HCT116 (cell line): ENCODE measurements at regions of chr20 and their contacts with region 1.

Region 1: DNA sequence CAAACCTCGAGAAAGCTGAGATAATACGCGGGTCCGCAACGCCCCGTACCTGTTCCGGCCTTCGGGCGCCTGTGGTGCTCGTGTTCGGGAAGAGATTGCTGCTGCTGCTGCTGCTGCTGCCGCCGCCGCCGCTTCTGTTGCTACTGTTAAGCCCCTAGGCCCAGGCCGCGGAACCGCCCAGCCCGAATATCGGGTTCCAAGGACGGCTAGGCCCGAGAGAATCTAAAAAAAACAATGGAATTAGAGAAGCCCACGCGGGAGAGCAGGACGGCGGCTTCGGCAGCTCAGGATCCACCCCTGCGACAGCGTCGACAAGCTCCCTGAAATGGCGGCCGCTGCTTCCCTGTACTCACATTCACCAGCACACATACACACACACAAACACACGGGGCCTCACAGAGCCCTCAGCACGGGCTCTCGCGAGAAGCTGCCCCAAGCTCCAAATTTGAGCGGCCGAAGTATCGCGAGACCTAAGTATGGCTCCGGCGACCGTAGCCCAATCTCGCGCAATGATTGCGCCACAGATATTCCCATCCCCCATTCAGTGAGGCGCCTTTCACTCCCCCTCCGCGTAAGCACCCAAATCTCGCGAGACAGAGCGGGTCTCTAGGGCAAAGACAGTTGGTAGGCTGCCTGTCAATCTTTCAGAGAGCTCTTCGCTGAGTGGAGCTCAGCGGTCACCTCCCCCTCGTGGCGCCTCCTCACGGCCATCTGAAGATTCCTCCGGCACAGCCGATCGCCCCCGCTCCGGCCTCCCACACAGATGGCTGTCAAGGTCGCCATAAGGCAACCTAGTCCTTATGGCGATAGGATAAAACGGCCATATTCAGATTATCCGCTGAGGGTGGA is at the start of gene RBM39:
- DNase-seq: peak; percentile 100
- ATAC-seq: peak; percentile 94
- H3K4me3 ChIP-seq: peak within 1 kb of the TSS; percentile 77 to 97
- H3K27ac ChIP-seq: peak within 1 kb of the TSS; percentile 91
- H3K4me1 ChIP-seq: peaks cover 10 to 28% of the 10 kb centered on the region in 2 experiments
- H3K27me3 ChIP-seq: no peaks in the 10 kb centered on the region
- CTCF ChIP-seq: peak in 1 of 3 experiments; percentile 38; a peak in 1 of 6 replicates
- POLR2A ChIP-seq: peak; percentile 70
- RAD21 ChIP-seq: no peak
- total RNA-seq, gene RBM39: 234 TPM

Region 2: GRCh38 chr20:35652641-35653429 is 89.3 kb before region 1 on chr20:
- CTCF ChIA-PET with region 1: no interaction called
- POLR2A ChIA-PET with region 1: no interaction called
- RAD21 ChIA-PET with region 1: no interaction called
- intact Hi-C with region 1: no loop called
- DNase-seq: no peak
- ATAC-seq: no peak
- H3K4me3 ChIP-seq: no peak overlapping the region
- H3K27ac ChIP-seq: no peak overlapping the region
- H3K4me1 ChIP-seq: no peaks in the 10 kb centered on the region
- H3K27me3 ChIP-seq: no peaks in the 10 kb centered on the region
- CTCF ChIP-seq: no peak
- POLR2A ChIP-seq: no peak
- RAD21 ChIP-seq: no peak

Region 3: DNA sequence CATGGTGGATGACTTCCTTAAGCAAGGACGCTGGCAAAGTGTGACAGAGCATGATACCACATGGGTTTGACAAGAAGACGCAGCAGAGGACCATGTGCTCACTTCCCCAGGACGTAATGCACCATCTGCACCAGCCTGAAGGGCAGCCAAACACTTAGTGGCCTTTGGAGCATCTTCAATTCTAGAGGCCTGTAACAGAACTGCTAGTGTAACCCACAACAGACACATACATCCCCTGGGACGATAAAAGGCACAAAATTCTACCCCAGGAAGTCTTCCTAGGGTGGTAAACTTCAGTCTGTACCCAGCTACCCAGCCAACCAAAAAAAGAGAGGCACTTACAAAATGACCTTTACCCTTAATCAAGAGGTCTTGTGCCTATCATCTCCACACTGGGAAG is 68.2 kb before region 1 on chr20:
- CTCF ChIA-PET with region 1: no interaction called
- POLR2A ChIA-PET with region 1: no interaction called
- RAD21 ChIA-PET with region 1: no interaction called
- intact Hi-C with region 1: no loop called
- DNase-seq: no peak
- ATAC-seq: no peak
- H3K4me3 ChIP-seq: no peak overlapping the region
- H3K27ac ChIP-seq: no peak overlapping the region
- H3K4me1 ChIP-seq: no peaks in the 10 kb centered on the region
- H3K27me3 ChIP-seq: no peaks in the 10 kb centered on the region
- CTCF ChIP-seq: no peak
- POLR2A ChIP-seq: no peak
- RAD21 ChIP-seq: no peak

Region 4: DNA sequence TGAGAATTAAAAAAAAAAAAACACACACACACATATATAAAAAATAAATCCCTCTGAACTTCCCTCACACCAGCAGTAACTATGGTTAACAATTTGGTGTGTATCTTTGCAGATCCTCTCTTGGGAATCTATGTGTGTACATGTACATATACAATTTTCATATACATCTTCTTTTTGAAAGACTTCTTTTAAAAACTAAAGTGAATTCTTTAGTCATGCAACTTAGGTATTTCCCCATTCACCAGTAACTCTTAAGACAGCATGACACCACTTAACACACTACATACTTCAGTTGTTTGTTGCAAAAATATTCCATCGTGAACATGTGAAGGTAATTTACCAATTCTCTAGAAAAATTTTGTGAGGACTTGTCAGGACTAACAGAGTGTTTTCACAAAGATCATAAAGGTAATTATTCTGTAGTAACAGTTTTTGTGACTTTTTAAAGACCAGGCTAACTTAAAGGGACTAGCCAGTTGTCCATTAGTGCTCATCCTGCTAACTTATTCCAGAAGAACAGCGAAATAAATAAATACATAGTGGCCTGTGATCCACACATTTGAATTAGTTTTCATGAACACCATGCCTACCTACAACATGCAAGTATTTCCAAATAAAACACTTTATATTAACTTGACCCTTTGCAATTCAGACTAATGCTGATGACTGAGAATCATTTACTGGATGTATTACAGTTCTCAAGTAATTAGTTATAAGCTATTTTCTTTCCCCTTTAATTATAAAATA is 12.1 kb before region 1 on chr20:
- CTCF ChIA-PET with region 1: no interaction called
- POLR2A ChIA-PET with region 1: interaction called, 13 read pairs
- RAD21 ChIA-PET with region 1: no interaction called
- intact Hi-C with region 1: no loop called
- DNase-seq: no peak
- ATAC-seq: no peak
- H3K4me3 ChIP-seq: no peak overlapping the region
- H3K27ac ChIP-seq: no peak overlapping the region
- H3K4me1 ChIP-seq: no peaks in the 10 kb centered on the region
- H3K27me3 ChIP-seq: no peaks in the 10 kb centered on the region
- CTCF ChIP-seq: no peak
- POLR2A ChIP-seq: no peak
- RAD21 ChIP-seq: no peak

Region 5: GRCh38 chr20:35771689-35772562 is 29.8 kb after region 1 on chr20 and contains the start of gene PHF20:
- CTCF ChIA-PET with region 1: interaction called, 4 read pairs
- POLR2A ChIA-PET with region 1: interaction called, 58 read pairs
- RAD21 ChIA-PET with region 1: interaction called in 1 of 2 experiments, 3 read pairs
- intact Hi-C with region 1: no loop called
- DNase-seq: peak; percentile 92
- ATAC-seq: peak; percentile 95
- H3K4me3 ChIP-seq: peak within 1 kb of the TSS; percentile 83 to 91
- H3K27ac ChIP-seq: peak within 1 kb of the TSS; percentile 69
- H3K4me1 ChIP-seq: peaks cover 24 to 44% of the 10 kb centered on the region in 2 experiments
- H3K27me3 ChIP-seq: no peaks in the 10 kb centered on the region
- CTCF ChIP-seq: no peak
- POLR2A ChIP-seq: peak; percentile 81
- RAD21 ChIP-seq: no peak
- total RNA-seq, gene PHF20: 40.8 TPM

Region 6: DNA sequence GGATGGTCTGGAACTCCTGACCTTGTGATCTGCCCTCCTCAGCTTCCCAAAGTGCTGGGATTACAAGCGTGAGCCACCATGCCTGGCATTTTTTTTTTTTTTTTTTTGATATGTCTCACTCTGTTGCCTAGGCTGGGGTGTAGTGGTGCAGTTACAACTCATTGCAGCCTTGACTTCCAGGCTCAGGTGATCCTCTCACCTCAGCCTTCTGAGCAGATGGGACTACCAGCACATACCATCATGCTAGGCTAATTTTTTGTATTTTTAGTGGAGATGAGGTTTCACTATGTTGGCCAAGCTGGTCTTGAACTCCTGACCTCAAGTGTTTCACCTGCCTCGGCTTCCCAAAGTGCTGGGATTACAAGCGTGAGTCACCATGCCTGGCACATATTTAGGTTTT is 64.0 kb after region 1 on chr20:
- CTCF ChIA-PET with region 1: no interaction called
- POLR2A ChIA-PET with region 1: no interaction called
- RAD21 ChIA-PET with region 1: no interaction called
- intact Hi-C with region 1: no loop called
- DNase-seq: no peak
- ATAC-seq: no peak
- H3K4me3 ChIP-seq: no peak overlapping the region
- H3K27ac ChIP-seq: no peak overlapping the region
- H3K4me1 ChIP-seq: peaks cover 6 to 9% of the 10 kb centered on the region in 2 experiments
- H3K27me3 ChIP-seq: no peaks in the 10 kb centered on the region
- CTCF ChIP-seq: no peak
- POLR2A ChIP-seq: no peak
- RAD21 ChIP-seq: no peak

Region 7: DNA sequence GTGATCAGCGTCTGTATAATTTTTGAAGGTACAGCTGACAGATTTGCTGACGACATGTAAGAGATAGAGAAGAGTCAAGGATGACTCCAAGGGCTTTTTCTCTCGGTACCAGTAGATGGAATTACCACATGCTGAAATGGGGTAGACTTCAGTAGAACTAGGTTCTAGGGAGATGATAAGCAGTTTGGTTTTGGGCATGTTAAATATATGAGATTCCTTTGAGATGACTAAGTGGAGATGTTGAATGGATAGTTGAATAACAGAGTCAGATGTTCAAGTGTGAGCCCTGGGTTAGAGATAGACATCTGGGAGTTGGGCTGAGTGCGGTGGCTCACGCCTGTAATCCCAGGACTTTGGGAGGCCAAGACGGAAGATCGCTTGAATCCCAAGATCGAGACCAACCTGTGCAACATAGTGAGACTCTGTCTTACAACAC is 79.7 kb after region 1 on chr20:
- CTCF ChIA-PET with region 1: no interaction called
- POLR2A ChIA-PET with region 1: no interaction called
- RAD21 ChIA-PET with region 1: no interaction called
- intact Hi-C with region 1: no loop called
- DNase-seq: no peak
- ATAC-seq: peak; percentile 61
- H3K4me3 ChIP-seq: no peak overlapping the region
- H3K27ac ChIP-seq: no peak overlapping the region
- H3K4me1 ChIP-seq: peaks cover 17 to 45% of the 10 kb centered on the region in 2 experiments
- H3K27me3 ChIP-seq: no peaks in the 10 kb centered on the region
- CTCF ChIP-seq: no peak
- POLR2A ChIP-seq: no peak
- RAD21 ChIP-seq: no peak

Region 8: DNA sequence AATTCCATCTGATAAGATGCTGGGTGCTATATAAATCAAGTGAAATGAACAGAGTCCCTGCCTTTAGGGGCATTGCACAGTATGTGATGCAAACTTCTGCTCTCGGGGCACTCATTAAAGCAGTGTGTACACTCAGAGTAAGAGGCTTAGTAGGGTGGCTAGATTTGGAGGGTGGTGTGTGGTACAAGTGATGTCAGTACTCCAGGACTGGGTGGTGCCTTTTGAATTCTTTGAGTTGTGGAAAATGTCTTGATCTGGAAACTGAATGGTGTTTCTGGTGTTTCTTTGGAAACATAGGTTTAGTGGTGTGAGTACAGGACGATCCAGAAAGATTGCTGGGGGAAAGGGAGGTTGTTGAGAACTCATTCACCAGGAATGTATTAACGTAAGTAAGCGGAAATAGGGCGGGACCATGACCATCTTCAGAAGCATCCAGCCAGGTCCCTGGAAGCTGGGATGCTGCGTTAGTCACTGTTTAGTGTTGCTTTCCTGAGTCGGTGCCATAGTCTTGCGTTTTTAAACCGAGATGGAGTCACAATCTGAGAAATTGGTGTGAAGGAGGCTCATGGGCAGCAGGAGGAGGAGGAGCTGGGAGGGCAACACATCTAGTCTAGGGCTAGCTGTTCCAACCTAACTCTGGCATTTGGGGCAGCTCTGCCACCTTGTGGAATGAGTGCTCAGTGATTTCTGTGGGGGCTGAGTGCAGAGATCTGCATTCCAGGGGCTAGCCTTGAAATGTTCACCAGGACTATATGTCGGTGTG is 141.8 kb after region 1 on chr20:
- CTCF ChIA-PET with region 1: interaction called, 10 read pairs
- POLR2A ChIA-PET with region 1: interaction called, 44 read pairs
- RAD21 ChIA-PET with region 1: no interaction called
- intact Hi-C with region 1: loop called (anchors 2 kb)
- DNase-seq: peak; percentile 85
- ATAC-seq: peak; percentile 95
- H3K4me3 ChIP-seq: peak overlapping the region; percentile 15 to 45; a peak in 3 of 4 replicates
- H3K27ac ChIP-seq: peak overlapping the region; percentile 48; the same call in 1 of the 2 replicates
- H3K4me1 ChIP-seq: peaks cover 9 to 29% of the 10 kb centered on the region in 2 experiments
- H3K27me3 ChIP-seq: no peaks in the 10 kb centered on the region
- CTCF ChIP-seq: peak; percentile 63 to 84 (median 83); a peak in 5 of 6 replicates
- POLR2A ChIP-seq: no peak
- RAD21 ChIP-seq: peak; percentile 89

Region 9: GRCh38 chr20:35954200-35954906 is 212.2 kb after region 1 on chr20 and contains the start of gene SCAND1:
- CTCF ChIA-PET with region 1: interaction called, 5 read pairs
- POLR2A ChIA-PET with region 1: interaction called, 23 read pairs
- RAD21 ChIA-PET with region 1: no interaction called
- intact Hi-C with region 1: loop called (anchors 10 kb)
- DNase-seq: peak; percentile 96
- ATAC-seq: peak; percentile 92
- H3K4me3 ChIP-seq: peak within 1 kb of the TSS; percentile 96
- H3K27ac ChIP-seq: peak within 1 kb of the TSS; percentile 99
- H3K4me1 ChIP-seq: peaks cover 6 to 29% of the 10 kb centered on the region in 2 experiments; a peak in 3 of 4 replicates
- H3K27me3 ChIP-seq: no peaks in the 10 kb centered on the region
- CTCF ChIP-seq: peak; percentile 91 to 99 (median 95)
- POLR2A ChIP-seq: peak; percentile 30
- RAD21 ChIP-seq: peak; percentile 68
- total RNA-seq, gene SCAND1: 46.2 TPM